CD8-positive, alpha-beta T cell (primary cell): ENCODE measurements at regions of chr1 and their contacts with region 1.

Region 1: DNA sequence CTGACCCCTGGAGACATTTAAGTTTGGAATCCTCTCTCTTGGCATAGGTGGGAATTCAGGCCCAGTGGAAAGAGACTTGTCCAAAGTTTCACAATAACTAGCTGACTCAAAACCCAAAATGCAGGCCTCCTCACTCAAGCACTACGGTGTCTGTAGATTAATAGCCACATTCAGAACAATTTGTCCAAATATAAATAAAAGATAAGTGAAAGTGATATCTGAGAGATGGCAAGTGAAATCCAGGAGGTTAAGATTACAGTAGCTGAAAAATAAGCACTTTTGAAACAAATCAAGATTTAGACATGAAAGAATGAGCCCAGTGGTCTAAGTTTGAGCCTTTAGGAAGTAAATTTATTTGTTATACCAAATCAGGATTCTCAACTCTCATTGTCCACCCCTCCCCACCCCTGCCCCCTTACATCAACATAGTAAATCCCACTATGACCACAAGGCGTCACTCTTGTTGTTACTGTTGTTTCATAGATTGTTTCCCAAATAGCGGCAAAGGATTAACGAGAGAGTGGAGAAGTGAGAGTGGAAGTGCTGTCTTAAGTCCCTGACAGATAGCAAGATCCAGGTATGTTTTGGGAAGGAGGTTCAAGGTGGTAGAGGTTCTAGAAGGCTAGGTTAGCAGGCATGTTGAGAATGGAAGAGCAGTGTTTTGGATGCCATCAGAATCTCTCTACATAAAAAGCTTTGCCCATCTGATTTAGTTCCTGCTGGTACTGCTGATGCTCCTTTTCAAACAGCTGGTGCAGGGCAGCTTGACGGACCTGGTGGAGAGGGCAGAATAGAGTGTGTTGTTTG is 7.1 kb upstream of the TPM3 start:
- DNase-seq: peak in 6 of 9 experiments; percentile 41 to 81 (median 52)
- ATAC-seq: peak; percentile 97
- H3K4me3 ChIP-seq: no peak overlapping the region
- H3K4me3 Mint-ChIP-seq: no peak overlapping the region
- H3K27ac ChIP-seq: no peak overlapping the region
- H3K27ac Mint-ChIP-seq: no peak overlapping the region
- H3K4me1 ChIP-seq: peaks cover 9% of the 10 kb centered on the region
- H3K4me1 Mint-ChIP-seq: no peaks in the 10 kb centered on the region
- H3K27me3 ChIP-seq: no peaks in the 10 kb centered on the region
- H3K27me3 Mint-ChIP-seq: peaks cover 3% of the 10 kb centered on the region
- CTCF ChIP-seq: peak; percentile 63

Region 2: GRCh38 chr1:154170547-154171222 is 28.3 kb before region 1 on chr1:
- CTCF ChIA-PET with region 1: no interaction called
- POLR2A ChIA-PET with region 1: no interaction called
- intact Hi-C with region 1: no loop called
- DNase-seq: peak in 2 of 9 experiments; percentile 24 to 27
- ATAC-seq: peak; percentile 58
- H3K4me3 ChIP-seq: no peak overlapping the region
- H3K4me3 Mint-ChIP-seq: no peak overlapping the region
- H3K27ac ChIP-seq: no peak overlapping the region
- H3K27ac Mint-ChIP-seq: peak overlapping the region; percentile 75
- H3K4me1 ChIP-seq: peaks cover 4% of the 10 kb centered on the region
- H3K4me1 Mint-ChIP-seq: peaks cover 39% of the 10 kb centered on the region
- H3K27me3 ChIP-seq: no peaks in the 10 kb centered on the region
- H3K27me3 Mint-ChIP-seq: no peaks in the 10 kb centered on the region
- CTCF ChIP-seq: no peak

Region 3: DNA sequence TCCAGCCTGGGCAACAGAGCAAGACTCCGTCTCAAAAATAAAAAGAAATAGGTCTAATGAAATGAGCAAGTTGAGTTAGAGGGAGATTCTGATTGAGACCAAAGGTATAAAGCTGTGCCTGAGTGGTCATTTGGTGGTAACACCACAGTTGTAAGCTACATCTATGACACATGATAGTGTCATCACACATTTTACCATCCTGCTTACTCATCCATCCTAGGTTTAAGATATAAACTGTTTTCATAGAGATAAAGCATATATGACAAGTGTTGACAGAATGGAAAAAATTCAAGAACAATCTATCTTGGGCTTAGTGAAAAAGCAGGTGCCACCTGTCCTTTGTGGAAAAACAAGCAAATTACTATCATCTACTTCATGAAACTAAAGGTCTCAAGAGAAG is 14.3 kb after region 1 on chr1:
- CTCF ChIA-PET with region 1: interaction called, 18 read pairs
- POLR2A ChIA-PET with region 1: no interaction called
- intact Hi-C with region 1: no loop called
- DNase-seq: no peak
- ATAC-seq: no peak
- H3K4me3 ChIP-seq: no peak overlapping the region
- H3K4me3 Mint-ChIP-seq: no peak overlapping the region
- H3K27ac ChIP-seq: no peak overlapping the region
- H3K27ac Mint-ChIP-seq: peak overlapping the region; percentile 27
- H3K4me1 ChIP-seq: peaks cover 11% of the 10 kb centered on the region
- H3K4me1 Mint-ChIP-seq: peaks cover 22% of the 10 kb centered on the region
- H3K27me3 ChIP-seq: no peaks in the 10 kb centered on the region
- H3K27me3 Mint-ChIP-seq: no peaks in the 10 kb centered on the region
- CTCF ChIP-seq: no peak

Region 4: DNA sequence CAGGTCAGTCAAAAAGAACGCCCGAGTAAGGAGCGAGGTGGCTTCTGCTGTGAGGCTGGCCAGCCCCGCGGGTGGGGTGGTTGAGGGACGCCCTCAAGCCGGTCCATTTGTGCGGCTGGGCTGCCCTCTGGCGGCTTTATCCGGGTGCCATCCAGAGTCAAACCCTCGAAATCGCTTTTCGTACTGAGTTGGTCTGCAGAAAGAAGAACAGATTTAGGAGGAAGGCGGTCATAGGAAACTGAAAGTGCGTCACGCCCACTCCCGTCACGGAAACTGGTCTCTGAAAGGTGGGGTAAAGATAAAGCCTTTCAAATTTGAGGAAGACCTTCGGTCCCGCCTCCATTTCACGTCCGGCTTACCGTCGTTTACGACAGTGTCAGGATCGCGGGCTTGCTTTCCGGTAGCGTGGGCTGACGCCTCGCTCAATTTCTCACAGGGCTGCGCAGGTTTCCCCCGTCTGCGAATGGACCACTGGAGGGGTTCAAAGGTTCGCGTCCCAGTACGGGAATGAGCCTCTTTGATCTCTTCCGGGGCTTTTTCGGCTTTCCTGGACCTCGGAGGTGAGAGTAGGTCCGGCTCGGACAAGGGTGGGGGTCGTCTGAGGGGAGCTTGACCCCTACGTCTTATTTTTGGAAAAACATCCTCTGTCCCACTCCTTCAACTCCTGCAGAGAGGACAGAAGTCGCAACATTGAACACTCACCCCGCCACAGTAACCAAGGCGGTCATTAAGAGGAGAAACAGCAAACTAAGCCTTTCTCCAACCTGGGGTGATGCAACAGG is 73.4 kb after region 1 on chr1 and contains the start of gene HAX1:
- CTCF ChIA-PET with region 1: interaction called, 52 read pairs
- POLR2A ChIA-PET with region 1: interaction called, 8 read pairs
- intact Hi-C with region 1: loop called (anchors 1 kb)
- DNase-seq: peak; percentile 91 to 100 (median 94)
- ATAC-seq: peak; percentile 85
- H3K4me3 ChIP-seq: peak within 1 kb of the TSS; percentile 85 to 91
- H3K4me3 Mint-ChIP-seq: peak within 1 kb of the TSS; percentile 94
- H3K27ac ChIP-seq: peak within 1 kb of the TSS; percentile 88 to 92
- H3K27ac Mint-ChIP-seq: peak within 1 kb of the TSS; percentile 98
- H3K4me1 ChIP-seq: peaks cover 22% of the 10 kb centered on the region
- H3K4me1 Mint-ChIP-seq: peaks cover 38% of the 10 kb centered on the region
- H3K27me3 ChIP-seq: no peaks in the 10 kb centered on the region
- H3K27me3 Mint-ChIP-seq: no peaks in the 10 kb centered on the region
- CTCF ChIP-seq: peak; percentile 75
- total RNA-seq, gene HAX1: 56.8 to 58.4 TPM

Region 5: GRCh38 chr1:154304664-154305337 is 105.8 kb after region 1 on chr1:
- CTCF ChIA-PET with region 1: no interaction called
- POLR2A ChIA-PET with region 1: no interaction called
- intact Hi-C with region 1: no loop called
- DNase-seq: no peak
- ATAC-seq: no peak
- H3K4me3 ChIP-seq: no peak overlapping the region
- H3K4me3 Mint-ChIP-seq: no peak overlapping the region
- H3K27ac ChIP-seq: no peak overlapping the region
- H3K27ac Mint-ChIP-seq: no peak overlapping the region
- H3K4me1 ChIP-seq: no peaks in the 10 kb centered on the region
- H3K4me1 Mint-ChIP-seq: no peaks in the 10 kb centered on the region
- H3K27me3 ChIP-seq: no peaks in the 10 kb centered on the region
- H3K27me3 Mint-ChIP-seq: no peaks in the 10 kb centered on the region
- CTCF ChIP-seq: no peak